MCF 10A (cell line): ENCODE measurements at regions of chr1 and their contacts with region 1.

Region 1: DNA sequence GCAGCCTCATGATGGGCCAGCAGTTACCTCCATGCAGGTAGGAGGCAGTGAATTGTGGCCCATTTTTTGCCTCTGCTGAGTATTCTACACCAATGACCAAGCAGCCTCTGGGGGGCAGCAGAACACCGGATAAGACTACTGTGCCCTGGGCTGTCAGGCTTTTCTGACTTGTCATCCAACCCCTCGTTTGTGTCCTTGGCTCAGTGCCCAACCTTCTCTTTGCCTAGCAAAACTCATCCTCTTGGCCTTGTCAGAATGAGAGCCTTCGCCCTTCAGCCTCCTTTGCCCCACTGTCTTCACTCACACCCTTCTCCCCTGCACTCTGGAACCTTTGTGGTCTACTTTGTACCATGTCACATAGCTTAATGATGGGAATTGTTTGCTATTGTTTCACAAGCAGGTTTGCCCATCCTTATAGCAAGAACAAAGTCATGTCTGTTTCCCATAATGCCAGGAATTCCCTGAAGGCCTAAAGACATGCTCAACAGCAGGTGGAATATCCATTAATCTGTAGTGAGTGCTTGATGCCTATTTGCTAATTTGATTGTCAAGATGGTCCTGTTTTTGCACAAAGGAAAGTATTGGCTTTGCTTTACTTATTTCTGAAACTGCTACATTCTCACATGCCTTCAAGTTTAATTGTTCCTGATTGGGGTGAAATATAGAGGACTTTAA is 255.9 kb downstream of the HHAT start:
- DNase-seq: peak; percentile 97
- H3K4me3 Mint-ChIP-seq: no peak overlapping the region
- H3K27ac Mint-ChIP-seq: no peak overlapping the region
- H3K4me1 Mint-ChIP-seq: peaks cover 6% of the 10 kb centered on the region
- H3K27me3 Mint-ChIP-seq: no peaks in the 10 kb centered on the region
- CTCF ChIP-seq: peak; percentile 100

Region 2: DNA sequence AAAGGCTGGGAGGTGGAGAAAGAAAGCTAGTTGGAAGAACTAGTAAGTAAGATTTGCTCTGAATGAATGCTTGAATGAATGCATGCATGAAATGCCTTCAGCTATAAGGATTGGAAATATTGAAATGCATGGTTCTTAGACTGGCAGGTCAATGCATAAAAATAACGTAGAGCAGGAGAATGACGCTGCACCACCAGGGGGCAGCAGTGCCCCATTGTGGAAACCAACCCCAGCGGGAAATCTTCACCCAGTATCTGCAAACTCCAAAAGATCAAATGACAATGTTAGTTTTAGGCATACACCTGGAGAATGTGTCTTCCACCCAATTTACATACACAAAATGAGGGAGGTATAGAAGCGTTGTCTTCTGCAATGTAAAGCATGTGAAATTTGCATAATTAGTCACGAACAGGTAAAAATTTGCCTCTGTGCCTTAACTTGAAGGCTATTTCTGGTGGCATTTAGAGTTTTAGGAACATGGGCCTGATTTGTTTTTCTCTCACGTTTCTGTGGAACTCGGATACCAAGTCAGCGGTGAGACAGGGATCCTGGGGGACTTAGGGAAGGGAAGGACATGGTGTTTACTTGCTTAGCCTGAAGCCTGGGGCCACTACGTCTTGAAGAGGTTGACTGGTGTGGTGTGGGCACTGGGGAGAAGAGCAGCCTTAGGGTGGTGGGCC is 177.2 kb before region 1 on chr1:
- CTCF ChIA-PET with region 1: interaction called, 8 read pairs
- POLR2A ChIA-PET with region 1: no interaction called
- intact Hi-C with region 1: loop called (anchors 2 kb)
- DNase-seq: peak; percentile 84
- H3K4me3 Mint-ChIP-seq: no peak overlapping the region
- H3K27ac Mint-ChIP-seq: no peak overlapping the region
- H3K4me1 Mint-ChIP-seq: no peaks in the 10 kb centered on the region
- H3K27me3 Mint-ChIP-seq: no peaks in the 10 kb centered on the region
- CTCF ChIP-seq: peak; percentile 100

Region 3: GRCh38 chr1:210536254-210536961 is 48.2 kb before region 1 on chr1:
- CTCF ChIA-PET with region 1: no interaction called
- POLR2A ChIA-PET with region 1: no interaction called
- intact Hi-C with region 1: no loop called
- DNase-seq: no peak
- H3K4me3 Mint-ChIP-seq: no peak overlapping the region
- H3K27ac Mint-ChIP-seq: no peak overlapping the region
- H3K4me1 Mint-ChIP-seq: no peaks in the 10 kb centered on the region
- H3K27me3 Mint-ChIP-seq: peaks cover 17% of the 10 kb centered on the region
- CTCF ChIP-seq: no peak

Region 4: DNA sequence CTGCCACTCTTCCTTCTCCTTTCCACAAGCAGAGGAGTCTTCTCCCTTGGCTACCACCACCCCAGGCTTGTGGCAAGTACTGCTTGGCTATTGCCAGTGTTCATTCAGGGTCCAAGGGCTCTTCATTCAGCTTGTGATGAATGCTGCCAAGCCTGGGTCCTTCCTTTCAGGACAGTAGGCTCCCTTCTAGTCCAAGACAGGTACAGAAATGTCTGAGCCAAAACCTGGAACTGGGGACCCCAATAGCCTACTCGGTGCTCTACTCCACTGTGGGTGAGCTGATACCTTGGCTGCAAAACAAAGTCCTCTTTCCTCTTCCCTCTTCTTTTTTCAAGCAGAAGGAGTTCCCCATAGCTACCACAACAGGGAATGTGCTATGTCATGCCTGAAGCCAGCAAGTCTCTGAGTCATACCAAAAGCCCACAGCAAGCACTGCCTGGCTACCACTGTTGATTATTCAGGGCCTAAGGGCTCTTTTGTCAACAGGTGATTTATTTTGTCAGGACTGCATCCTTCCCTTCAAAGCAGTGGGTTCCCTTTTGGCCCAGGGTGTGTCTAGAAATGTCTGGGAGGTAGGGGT is 13.1 kb after region 1 on chr1:
- CTCF ChIA-PET with region 1: interaction called, 29 read pairs
- POLR2A ChIA-PET with region 1: interaction called, 5 read pairs
- intact Hi-C with region 1: no loop called
- DNase-seq: peak; percentile 94
- H3K4me3 Mint-ChIP-seq: no peak overlapping the region
- H3K27ac Mint-ChIP-seq: peak overlapping the region; percentile 98
- H3K4me1 Mint-ChIP-seq: peaks cover 19% of the 10 kb centered on the region
- H3K27me3 Mint-ChIP-seq: no peaks in the 10 kb centered on the region
- CTCF ChIP-seq: no peak

Region 5: GRCh38 chr1:210951279-210951678 is 366.7 kb after region 1 on chr1:
- CTCF ChIA-PET with region 1: interaction called, 24 read pairs
- POLR2A ChIA-PET with region 1: no interaction called
- intact Hi-C with region 1: loop called (anchors 1 kb)
- DNase-seq: no peak
- H3K4me3 Mint-ChIP-seq: no peak overlapping the region
- H3K27ac Mint-ChIP-seq: no peak overlapping the region
- H3K4me1 Mint-ChIP-seq: no peaks in the 10 kb centered on the region
- H3K27me3 Mint-ChIP-seq: no peaks in the 10 kb centered on the region
- CTCF ChIP-seq: no peak

Region 6: DNA sequence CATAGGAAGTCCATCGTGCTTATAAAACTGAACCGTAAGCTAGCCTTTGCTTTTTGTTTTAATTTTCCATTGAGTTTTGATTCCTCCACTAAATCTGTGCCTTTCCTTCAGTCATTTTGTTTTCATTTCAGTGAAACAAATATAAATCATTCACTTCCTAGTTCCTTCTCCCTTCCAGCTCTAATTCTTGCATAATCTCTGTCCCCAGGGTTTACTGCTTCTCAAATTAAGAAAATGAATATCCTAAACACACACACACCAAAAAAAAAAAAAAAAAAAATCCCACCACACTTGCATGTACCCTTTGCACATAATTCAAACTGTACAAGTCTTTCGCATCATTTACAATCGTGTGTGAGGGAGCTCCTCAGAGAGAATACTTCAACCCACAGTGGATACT is 542.6 kb after region 1 on chr1:
- CTCF ChIA-PET with region 1: interaction called, 365 read pairs
- POLR2A ChIA-PET with region 1: no interaction called
- intact Hi-C with region 1: no loop called
- DNase-seq: no peak
- H3K4me3 Mint-ChIP-seq: no peak overlapping the region
- H3K27ac Mint-ChIP-seq: no peak overlapping the region
- H3K4me1 Mint-ChIP-seq: peaks cover 7% of the 10 kb centered on the region
- H3K27me3 Mint-ChIP-seq: peaks cover 13% of the 10 kb centered on the region
- CTCF ChIP-seq: no peak

Region 7: DNA sequence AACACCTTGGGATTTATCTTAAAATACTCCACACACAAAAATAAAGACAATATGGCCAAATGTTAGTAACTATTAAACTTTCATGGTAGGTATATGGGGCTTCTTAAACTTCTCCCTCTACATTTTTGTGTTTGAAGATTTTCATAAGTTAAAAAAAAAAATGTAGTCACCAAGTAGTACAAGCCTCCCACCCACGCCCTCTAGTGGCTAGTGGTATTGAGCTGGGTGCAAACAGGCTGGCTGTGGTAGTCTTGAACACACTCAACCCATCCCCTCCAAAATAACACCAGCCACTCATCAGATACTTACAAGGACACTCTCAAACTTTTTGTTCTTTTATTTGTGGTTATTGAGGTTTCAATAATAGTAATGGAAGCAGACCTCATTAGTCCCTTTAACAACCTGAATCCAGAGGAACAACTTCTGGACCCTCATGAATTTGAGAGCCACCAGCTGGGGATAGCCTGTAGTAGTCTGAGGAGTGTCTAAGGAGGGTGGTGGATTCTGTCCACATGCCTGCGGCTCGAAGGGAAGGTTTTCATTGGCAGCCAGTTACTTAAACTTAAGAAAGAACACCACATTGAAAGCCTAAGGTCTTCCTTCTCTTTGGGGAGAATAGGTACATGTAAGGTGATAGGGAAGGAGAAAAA is 891.7 kb after region 1 on chr1:
- CTCF ChIA-PET with region 1: interaction called, 5 read pairs
- POLR2A ChIA-PET with region 1: no interaction called
- intact Hi-C with region 1: loop called (anchors 1 kb)
- DNase-seq: peak; percentile 93
- H3K4me3 Mint-ChIP-seq: no peak overlapping the region
- H3K27ac Mint-ChIP-seq: no peak overlapping the region
- H3K4me1 Mint-ChIP-seq: peaks cover 8% of the 10 kb centered on the region
- H3K27me3 Mint-ChIP-seq: no peaks in the 10 kb centered on the region
- CTCF ChIP-seq: peak; percentile 98